ENCODE measurements at regions of chr14 and their contacts with region 1.

Region 1: DNA sequence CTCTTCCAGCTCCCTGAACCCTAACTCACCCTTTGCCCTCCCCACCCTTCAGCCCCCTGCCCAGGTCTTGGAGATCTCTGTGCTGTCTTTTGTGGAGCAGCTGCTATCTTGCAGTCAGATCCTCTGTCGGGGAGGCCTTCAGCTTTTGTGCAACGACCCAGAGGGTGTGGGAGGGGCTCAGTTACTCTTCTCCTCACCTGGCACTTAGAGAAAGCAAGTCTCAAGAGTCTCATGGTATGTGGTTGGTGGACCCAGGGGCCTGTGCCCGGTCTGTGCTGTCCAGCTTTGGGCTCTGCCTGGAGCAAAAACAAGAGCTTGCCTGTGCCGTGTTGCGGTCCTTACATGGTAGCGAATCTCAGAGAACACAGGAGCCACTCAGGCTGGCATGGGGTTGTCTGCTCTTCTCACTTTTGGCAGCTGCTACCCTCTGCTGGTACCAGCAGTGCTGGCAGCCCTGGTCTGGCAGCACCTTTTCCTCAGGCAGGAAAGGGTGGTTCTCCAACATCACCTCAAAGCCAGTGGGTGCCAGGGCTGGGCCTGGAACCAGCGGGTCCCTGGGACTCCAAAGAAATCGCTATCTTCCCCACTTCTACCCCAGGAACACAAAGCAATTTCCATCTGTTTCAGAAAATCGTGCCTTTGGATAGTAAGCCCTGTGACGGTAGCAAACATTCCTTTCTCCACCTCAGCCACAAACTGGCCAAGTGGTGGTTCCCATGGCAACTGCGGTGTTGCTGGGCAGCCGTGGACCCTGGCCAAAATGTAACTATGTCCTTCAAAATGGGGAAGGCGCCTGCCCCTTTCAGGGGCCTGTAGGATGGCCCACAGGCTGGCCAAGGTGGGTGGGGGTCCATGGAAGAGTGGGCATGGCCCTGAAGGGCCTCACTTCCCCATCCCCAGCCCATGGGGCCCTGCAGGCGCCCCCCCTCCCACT is 90.0 kb downstream of the RIN3 start:
- DNase-seq: no peak
- H3K4me3 ChIP-seq: no peak overlapping the region
- H3K27me3 ChIP-seq: no peaks in the 10 kb centered on the region
- CTCF ChIP-seq: peak; percentile 25

Region 2: GRCh38 chr14:91482263-91483013 is 1121.1 kb before region 1 on chr14:
- CTCF ChIA-PET with region 1: no interaction called
- POLR2A ChIA-PET with region 1: interaction called, 12 read pairs
- DNase-seq: no peak
- H3K4me3 ChIP-seq: no peak overlapping the region
- H3K27me3 ChIP-seq: no peaks in the 10 kb centered on the region
- CTCF ChIP-seq: no peak

Region 3: GRCh38 chr14:92439537-92440344 is 163.8 kb before region 1 on chr14:
- CTCF ChIA-PET with region 1: no interaction called
- POLR2A ChIA-PET with region 1: no interaction called
- DNase-seq: no peak
- H3K4me3 ChIP-seq: no peak overlapping the region
- H3K27me3 ChIP-seq: peaks cover 3% of the 10 kb centered on the region
- CTCF ChIP-seq: no peak

Region 4: GRCh38 chr14:92589213-92589852 is 14.2 kb before region 1 on chr14:
- CTCF ChIA-PET with region 1: interaction called, 13 read pairs
- POLR2A ChIA-PET with region 1: no interaction called
- DNase-seq: no peak
- H3K4me3 ChIP-seq: no peak overlapping the region
- H3K27me3 ChIP-seq: no peaks in the 10 kb centered on the region
- CTCF ChIP-seq: peak; percentile 52

Measured in BJ (cell line).